ENCODE measurements at regions of chr1 and their contacts with region 1.

Region 1: GRCh38 chr1:160161965-160162705 is 10.7 kb downstream of the ATP1A4 start:
- DNase-seq: no peak
- ATAC-seq: peak; percentile 93
- H3K4me3 ChIP-seq: no peak overlapping the region
- H3K27ac ChIP-seq: no peak overlapping the region
- H3K4me1 ChIP-seq: no peaks in the 10 kb centered on the region
- H3K27me3 ChIP-seq: no peaks in the 10 kb centered on the region
- CTCF ChIP-seq: peak; percentile 43 to 61 (median 55); a peak in 5 of 6 replicates
- POLR2A ChIP-seq: no peak
- RAD21 ChIP-seq: peak; percentile 59

Region 2: GRCh38 chr1:160219062-160219929 is 57.2 kb after region 1 on chr1:
- CTCF ChIA-PET with region 1: interaction called, 11 read pairs
- POLR2A ChIA-PET with region 1: no interaction called
- RAD21 ChIA-PET with region 1: interaction called in 1 of 2 experiments, 3 read pairs
- intact Hi-C with region 1: no loop called
- DNase-seq: peak; percentile 19
- ATAC-seq: peak; percentile 78
- H3K4me3 ChIP-seq: no peak overlapping the region
- H3K27ac ChIP-seq: no peak overlapping the region
- H3K4me1 ChIP-seq: no peaks in the 10 kb centered on the region
- H3K27me3 ChIP-seq: no peaks in the 10 kb centered on the region
- CTCF ChIP-seq: peak; percentile 36 to 41 (median 40); a peak in 4 of 6 replicates
- POLR2A ChIP-seq: no peak
- RAD21 ChIP-seq: peak; percentile 60

Region 3: GRCh38 chr1:161111527-161111926 is 949.4 kb after region 1 on chr1:
- CTCF ChIA-PET with region 1: no interaction called
- POLR2A ChIA-PET with region 1: no interaction called
- RAD21 ChIA-PET with region 1: no interaction called
- intact Hi-C with region 1: no loop called
- DNase-seq: no peak
- ATAC-seq: no peak
- H3K4me3 ChIP-seq: no peak overlapping the region
- H3K27ac ChIP-seq: no peak overlapping the region
- H3K4me1 ChIP-seq: peaks cover 22 to 36% of the 10 kb centered on the region in 2 experiments
- H3K27me3 ChIP-seq: no peaks in the 10 kb centered on the region
- CTCF ChIP-seq: no peak
- POLR2A ChIP-seq: no peak
- RAD21 ChIP-seq: no peak